PC-9 (cell line): ENCODE measurements at regions of chr2 and their contacts with region 1.

Region 1: GRCh38 chr2:171365232-171365631 is 68.6 kb downstream of the METTL8 start:
- DNase-seq: no peak
- H3K4me3 ChIP-seq: no peak overlapping the region
- H3K27ac ChIP-seq: no peak overlapping the region
- H3K4me1 ChIP-seq: no peaks in the 10 kb centered on the region
- H3K27me3 ChIP-seq: no peaks in the 10 kb centered on the region
- CTCF ChIP-seq: no peak

Region 2: GRCh38 chr2:170966648-170967436 is 398.4 kb before region 1 on chr2:
- CTCF ChIA-PET with region 1: no interaction called
- POLR2A ChIA-PET with region 1: no interaction called
- intact Hi-C with region 1: no loop called
- DNase-seq: no peak
- H3K4me3 ChIP-seq: no peak overlapping the region
- H3K27ac ChIP-seq: no peak overlapping the region
- H3K4me1 ChIP-seq: no peaks in the 10 kb centered on the region
- H3K27me3 ChIP-seq: no peaks in the 10 kb centered on the region
- CTCF ChIP-seq: peak; percentile 7; the same call in 1 of the 2 replicates

Region 3: GRCh38 chr2:171134624-171135230 is 230.5 kb before region 1 on chr2:
- CTCF ChIA-PET with region 1: no interaction called
- POLR2A ChIA-PET with region 1: interaction called, 15 read pairs
- intact Hi-C with region 1: no loop called
- DNase-seq: no peak
- H3K4me3 ChIP-seq: no peak overlapping the region
- H3K27ac ChIP-seq: no peak overlapping the region
- H3K4me1 ChIP-seq: no peaks in the 10 kb centered on the region; the same call in 1 of the 2 replicates
- H3K27me3 ChIP-seq: no peaks in the 10 kb centered on the region
- CTCF ChIP-seq: no peak

Region 4: DNA sequence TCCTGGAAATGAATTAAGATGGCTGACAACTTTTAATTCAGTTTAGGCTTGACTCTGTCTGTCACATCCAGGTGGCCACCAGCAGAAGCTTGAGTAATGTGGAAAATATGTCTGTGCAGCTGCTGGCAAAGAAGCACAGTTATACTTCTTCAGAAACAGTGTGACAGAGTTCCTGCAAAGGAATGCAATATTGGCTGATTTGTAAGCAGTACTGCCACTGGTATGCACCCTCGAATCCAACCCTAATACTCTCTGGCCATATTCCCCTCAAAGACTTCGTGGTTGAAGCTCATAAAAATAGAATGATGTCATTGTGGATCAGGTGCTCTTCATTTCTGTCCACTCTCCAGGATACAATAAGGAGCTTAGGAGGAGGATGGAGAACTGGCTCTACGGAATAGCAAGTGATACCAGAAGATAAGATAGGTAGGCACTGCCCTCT is 17.6 kb before region 1 on chr2:
- CTCF ChIA-PET with region 1: no interaction called
- POLR2A ChIA-PET with region 1: no interaction called
- intact Hi-C with region 1: no loop called
- DNase-seq: peak; percentile 60 to 93
- H3K4me3 ChIP-seq: no peak overlapping the region
- H3K27ac ChIP-seq: peak overlapping the region; percentile 43
- H3K4me1 ChIP-seq: peaks cover 30% of the 10 kb centered on the region
- H3K27me3 ChIP-seq: no peaks in the 10 kb centered on the region
- CTCF ChIP-seq: no peak

Region 5: DNA sequence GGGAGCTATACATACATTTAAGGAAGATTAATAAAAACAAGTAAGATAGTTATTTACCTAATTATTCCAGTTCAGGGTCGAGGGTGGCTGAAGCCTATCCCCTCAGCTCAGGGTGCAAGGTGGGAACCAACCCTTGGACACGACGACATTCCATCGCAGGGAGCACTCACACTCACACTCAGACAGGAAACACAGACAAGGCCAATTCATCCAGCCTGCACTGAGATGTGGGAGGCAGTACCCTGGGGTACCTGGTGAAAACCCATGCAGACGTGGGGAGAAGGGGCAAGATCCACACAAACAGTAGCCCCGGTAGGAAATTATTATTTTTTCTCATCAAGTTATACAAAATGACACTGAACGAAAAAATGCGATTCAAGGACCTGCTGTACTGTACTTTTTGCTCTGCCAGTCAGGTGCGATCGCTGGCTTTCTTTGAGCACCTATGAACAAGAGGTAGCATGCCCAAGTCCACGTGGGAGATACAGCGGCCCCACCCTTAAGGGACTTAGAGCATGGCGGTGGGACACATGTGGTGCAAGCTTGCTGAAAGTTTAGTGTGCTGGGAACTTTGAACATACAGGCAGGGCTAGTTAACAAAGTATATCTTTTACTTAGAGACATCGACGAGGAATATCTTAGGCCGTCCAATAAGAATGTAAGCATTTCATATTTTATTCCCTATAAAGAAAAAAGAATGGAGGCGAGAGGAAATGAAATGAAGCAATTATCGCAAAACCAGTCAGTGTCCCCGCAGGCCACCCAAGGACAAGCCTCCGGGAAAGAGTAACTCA is 67.9 kb after region 1 on chr2:
- CTCF ChIA-PET with region 1: no interaction called
- POLR2A ChIA-PET with region 1: no interaction called
- intact Hi-C with region 1: no loop called
- DNase-seq: peak; percentile 51 to 75
- H3K4me3 ChIP-seq: peak overlapping the region; percentile 64
- H3K27ac ChIP-seq: peak overlapping the region; percentile 93
- H3K4me1 ChIP-seq: peaks cover 25% of the 10 kb centered on the region
- H3K27me3 ChIP-seq: no peaks in the 10 kb centered on the region
- CTCF ChIP-seq: no peak